ENCODE measurements at regions of chr5 and their contacts with region 1.

Region 1: GRCh38 chr5:172782169-172783039 is 11.4 kb upstream of the DUSP1 start:
- DNase-seq: peak in 1 of 7 donors; percentile 2
- H3K4me3 ChIP-seq: no peak overlapping the region
- H3K27ac ChIP-seq: no peak overlapping the region
- H3K4me1 ChIP-seq: peaks cover 0 to 11% of the 10 kb centered on the region in 2 donors
- H3K27me3 ChIP-seq: no peaks in the 10 kb centered on the region
- CTCF ChIP-seq: no peak
- POLR2A ChIP-seq: no peak

Region 2: GRCh38 chr5:172697123-172698121 is 85.0 kb before region 1 on chr5:
- intact Hi-C with region 1: no loop called
- DNase-seq: peak; percentile 90 to 96 (median 94)
- H3K4me3 ChIP-seq: peak overlapping the region in 3 of 4 donors; percentile 17 to 64 (median 37)
- H3K27ac ChIP-seq: peak overlapping the region in 4 of 5 donors; percentile 13 to 78 (median 56)
- H3K4me1 ChIP-seq: peaks cover 5 to 24% of the 10 kb centered on the region in 2 donors
- H3K27me3 ChIP-seq: no peaks in the 10 kb centered on the region
- CTCF ChIP-seq: peak; percentile 85 to 98 (median 96)
- POLR2A ChIP-seq: peak; percentile 10 to 52

Region 3: GRCh38 chr5:172833686-172834414 is 51.4 kb after region 1 on chr5 and contains the start of gene ERGIC1:
- intact Hi-C with region 1: loop called in 1 of 2 experiments (anchors 5 kb)
- DNase-seq: peak; percentile 87 to 94 (median 90)
- H3K4me3 ChIP-seq: peak within 1 kb of the TSS; percentile 58 to 94 (median 80)
- H3K27ac ChIP-seq: peak within 1 kb of the TSS; percentile 74 to 93 (median 92)
- H3K4me1 ChIP-seq: peaks cover 42 to 49% of the 10 kb centered on the region in 2 donors
- H3K27me3 ChIP-seq: no peaks in the 10 kb centered on the region
- CTCF ChIP-seq: peak in 1 of 6 experiments; percentile 1
- POLR2A ChIP-seq: peak; percentile 64 to 78
- total RNA-seq, gene ERGIC1: 108 to 410 (median 248) TPM

Region 4: GRCh38 chr5:172932313-172933017 is 150.1 kb after region 1 on chr5:
- intact Hi-C with region 1: no loop called
- DNase-seq: peak; percentile 71 to 91 (median 83)
- H3K4me3 ChIP-seq: no peak overlapping the region
- H3K27ac ChIP-seq: peak overlapping the region in 3 of 5 donors; percentile 64 to 88 (median 68)
- H3K4me1 ChIP-seq: peaks cover 0 to 18% of the 10 kb centered on the region in 2 donors
- H3K27me3 ChIP-seq: no peaks in the 10 kb centered on the region
- CTCF ChIP-seq: peak; percentile 90 to 98 (median 96)
- POLR2A ChIP-seq: peak in 1 of 2 donors; percentile 30

Region 5: DNA sequence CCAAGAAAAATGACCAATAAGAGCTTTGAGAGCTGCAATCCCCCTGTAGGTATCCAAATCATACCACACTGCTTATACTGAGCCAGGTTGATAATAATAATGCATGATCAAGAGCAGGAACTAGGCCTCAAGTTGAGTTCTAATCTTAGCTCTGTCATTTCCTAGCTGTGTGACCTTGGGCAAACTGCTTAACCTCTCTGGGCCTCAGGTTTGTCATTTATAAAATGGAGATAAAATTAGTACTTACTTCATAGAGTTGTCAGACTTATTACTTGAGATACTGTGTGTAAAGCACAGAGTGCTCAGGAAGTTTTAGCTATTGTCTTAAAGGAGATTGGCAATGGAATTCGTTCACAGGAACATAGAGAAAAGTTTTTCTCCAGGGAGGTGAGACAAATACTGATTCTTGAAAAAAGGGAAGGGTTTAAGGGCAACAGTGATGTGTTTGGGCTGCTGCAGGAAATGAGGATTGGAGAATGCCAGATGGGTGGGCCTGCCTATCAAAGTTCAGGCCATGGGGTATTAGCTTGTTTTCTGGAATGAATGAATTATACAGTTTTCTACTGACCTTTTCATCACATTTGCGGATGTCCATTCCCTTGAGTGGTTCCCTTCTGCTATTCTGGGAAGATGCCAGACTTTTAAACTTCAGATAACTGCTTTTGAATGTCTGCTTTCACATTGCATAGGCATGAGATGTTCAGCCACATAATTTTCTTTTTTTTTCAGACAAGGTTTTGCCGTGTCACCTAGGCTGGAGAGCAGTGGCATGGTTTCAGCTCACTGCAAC is 190.9 kb after region 1 on chr5:
- intact Hi-C with region 1: no loop called
- DNase-seq: no peak
- H3K4me3 ChIP-seq: no peak overlapping the region
- H3K27ac ChIP-seq: peak overlapping the region in 1 of 5 donors; percentile 24
- H3K4me1 ChIP-seq: no peaks in the 10 kb centered on the region
- H3K27me3 ChIP-seq: no peaks in the 10 kb centered on the region
- CTCF ChIP-seq: no peak
- POLR2A ChIP-seq: no peak